ENCODE measurements at regions of chr4 and their contacts with region 1.

Region 1: DNA sequence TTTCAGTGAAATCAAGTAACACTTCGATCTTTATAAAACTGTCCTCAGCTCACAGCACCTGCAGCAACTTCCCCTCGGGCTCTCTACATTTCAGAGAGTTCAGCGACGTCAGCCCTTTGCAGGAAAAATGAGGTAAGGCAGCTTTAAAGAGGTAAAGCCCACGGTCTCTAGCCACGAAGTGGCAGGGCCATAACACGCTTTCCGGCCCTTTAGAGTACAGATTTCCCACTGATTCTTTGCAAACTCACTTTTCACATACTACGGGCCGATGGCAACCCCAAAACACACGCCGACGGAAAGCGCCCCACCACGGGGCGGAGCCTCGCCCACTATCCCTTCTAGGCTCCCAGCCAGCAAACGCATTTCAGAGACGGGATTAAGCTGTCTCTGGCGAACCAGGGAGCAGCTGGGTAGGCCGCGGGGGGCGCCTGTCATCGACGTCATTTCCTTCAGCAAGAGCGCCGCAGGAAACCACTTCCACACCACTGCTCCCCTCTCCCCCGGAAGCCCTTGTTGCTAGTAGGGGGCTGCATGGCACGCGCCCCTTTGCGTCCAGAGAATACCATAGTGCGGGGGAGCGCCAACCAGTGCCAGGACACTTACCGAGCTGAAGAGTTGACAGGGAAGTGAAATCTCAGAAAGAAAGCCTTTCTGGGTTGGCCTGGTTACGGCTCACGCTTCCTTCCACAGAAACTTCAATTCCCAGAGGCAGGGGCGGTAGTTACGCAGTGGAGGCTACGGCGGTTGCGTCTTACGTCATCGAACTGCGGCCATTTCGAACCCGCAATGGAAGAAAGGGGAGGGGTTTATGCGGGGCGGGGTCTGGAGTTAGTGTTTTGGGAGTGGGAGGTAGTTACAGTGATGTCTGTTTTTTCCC is at the start of gene TRMT10A:
- H3K4me3 Mint-ChIP-seq: peak within 1 kb of the TSS; percentile 87
- H3K27ac Mint-ChIP-seq: peak within 1 kb of the TSS; percentile 95
- H3K4me1 Mint-ChIP-seq: no peaks in the 10 kb centered on the region
- H3K27me3 Mint-ChIP-seq: peaks cover 12% of the 10 kb centered on the region

Region 2: GRCh38 chr4:98143001-98143899 is 1420.3 kb before region 1 on chr4 and contains the start of gene STPG2:
- intact Hi-C with region 1: loop called (anchors 10 kb)
- H3K4me3 Mint-ChIP-seq: peak within 1 kb of the TSS; percentile 78
- H3K27ac Mint-ChIP-seq: peak within 1 kb of the TSS; percentile 92
- H3K4me1 Mint-ChIP-seq: peaks cover 11% of the 10 kb centered on the region
- H3K27me3 Mint-ChIP-seq: peaks cover 5% of the 10 kb centered on the region

Region 3: GRCh38 chr4:99008051-99008450 is 555.5 kb before region 1 on chr4:
- intact Hi-C with region 1: no loop called
- H3K4me3 Mint-ChIP-seq: no peak overlapping the region
- H3K27ac Mint-ChIP-seq: no peak overlapping the region
- H3K4me1 Mint-ChIP-seq: peaks cover 18% of the 10 kb centered on the region
- H3K27me3 Mint-ChIP-seq: no peaks in the 10 kb centered on the region

Region 4: DNA sequence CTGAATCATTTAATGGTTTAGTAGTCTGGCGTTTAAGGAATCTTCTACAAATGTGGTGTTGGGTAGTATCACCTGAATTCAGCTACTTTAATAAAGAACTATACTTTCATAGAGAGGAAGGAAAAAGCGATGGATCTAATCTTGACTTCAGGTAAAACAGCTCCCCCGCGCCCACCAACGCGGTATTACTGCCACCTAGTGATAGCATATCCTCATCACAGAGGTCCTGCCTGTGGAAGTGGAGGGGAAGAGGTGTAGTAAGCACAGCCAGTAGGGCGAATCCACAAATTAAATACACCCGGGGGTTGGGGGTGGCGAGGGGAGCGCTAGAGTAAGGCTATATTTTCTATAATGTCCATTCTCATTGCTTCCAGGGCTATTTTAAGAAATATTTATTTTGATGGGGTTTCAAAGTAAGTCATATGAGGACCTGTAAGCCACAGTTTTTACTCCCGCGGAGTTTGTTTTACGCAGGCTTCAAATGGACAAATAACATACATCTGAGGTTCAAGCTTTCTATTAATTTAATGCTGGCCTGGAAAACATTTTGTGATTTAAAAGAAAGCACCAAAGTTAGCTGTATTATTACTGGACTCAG is 244.8 kb after region 1 on chr4:
- intact Hi-C with region 1: loop called (anchors 2 kb)
- H3K4me3 Mint-ChIP-seq: no peak overlapping the region
- H3K27ac Mint-ChIP-seq: no peak overlapping the region
- H3K4me1 Mint-ChIP-seq: peaks cover 10% of the 10 kb centered on the region
- H3K27me3 Mint-ChIP-seq: no peaks in the 10 kb centered on the region

Region 5: DNA sequence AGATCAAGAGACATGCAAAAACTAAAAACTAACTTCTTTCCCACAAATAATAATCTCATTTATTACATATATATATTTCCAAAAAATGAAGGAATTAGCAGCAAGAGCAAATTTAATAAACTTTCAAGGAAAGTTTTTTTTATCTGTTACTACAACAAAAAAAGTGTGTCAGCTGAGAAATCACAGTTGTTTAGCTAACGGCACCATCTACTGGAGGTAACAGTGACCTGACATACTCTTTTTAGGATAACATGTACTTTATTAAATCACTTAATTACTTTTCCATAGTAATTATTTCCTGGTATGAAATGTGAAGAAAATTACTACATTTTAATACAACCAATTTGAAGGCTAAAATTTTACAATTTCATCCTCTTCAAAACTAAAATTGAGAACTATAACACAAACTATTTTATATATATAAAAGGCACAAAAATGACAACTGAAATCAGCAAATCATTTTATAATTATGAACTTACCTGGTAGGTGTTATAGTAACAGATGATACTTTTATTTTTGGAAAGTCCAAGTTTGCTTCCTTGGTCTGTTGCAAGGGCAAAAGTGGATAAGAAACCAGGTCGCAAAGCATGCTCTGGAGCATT is 321.6 kb after region 1 on chr4:
- intact Hi-C with region 1: no loop called
- H3K4me3 Mint-ChIP-seq: no peak overlapping the region
- H3K27ac Mint-ChIP-seq: no peak overlapping the region
- H3K4me1 Mint-ChIP-seq: peaks cover 5% of the 10 kb centered on the region
- H3K27me3 Mint-ChIP-seq: no peaks in the 10 kb centered on the region

Region 6: DNA sequence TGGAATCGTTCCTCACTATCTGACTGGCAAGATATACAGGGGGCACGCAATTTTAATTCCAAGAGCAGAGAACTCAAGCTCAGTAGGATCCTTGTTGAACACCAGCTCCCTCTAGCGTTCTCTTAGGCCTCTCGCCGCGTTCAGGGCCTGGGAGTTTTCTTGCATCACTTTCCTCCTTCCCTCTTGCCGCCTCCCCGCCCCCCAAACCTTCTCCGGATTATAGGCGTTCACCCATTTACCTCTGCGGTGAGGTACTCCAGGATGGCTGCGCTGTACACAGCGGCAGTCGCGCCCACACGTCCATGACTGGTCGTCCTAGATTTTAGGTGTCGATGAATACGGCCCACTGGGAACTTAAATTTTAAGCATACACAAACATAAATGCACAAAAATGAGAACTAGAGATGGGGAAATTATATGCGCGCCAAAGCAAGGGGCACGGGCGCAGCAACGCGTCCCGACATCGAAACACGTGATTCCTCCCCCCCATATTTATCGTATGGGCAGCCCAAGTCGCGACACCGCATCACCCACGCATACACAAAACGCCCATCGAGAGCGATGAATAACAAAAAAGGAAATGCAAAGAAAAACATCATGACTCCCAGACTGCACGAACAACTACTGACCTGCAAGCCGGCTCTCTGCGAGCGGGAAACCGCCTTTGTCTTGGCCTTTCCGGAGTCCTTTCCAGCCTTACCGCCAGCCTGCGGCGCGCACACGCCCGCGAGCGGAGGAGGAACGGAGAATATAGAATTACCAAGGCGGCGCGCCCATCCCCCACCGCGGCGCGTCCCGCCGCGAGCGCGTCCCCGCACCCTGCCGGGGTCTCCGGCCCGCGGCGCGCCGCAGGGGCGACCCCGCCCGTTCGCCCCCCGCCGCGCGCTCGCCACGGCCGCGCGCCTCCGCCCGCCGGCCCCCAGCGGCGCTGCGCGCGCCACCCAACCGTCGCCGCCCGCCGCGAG is 385.8 kb after region 1 on chr4:
- intact Hi-C with region 1: loop called (anchors 1 kb)
- H3K4me3 Mint-ChIP-seq: no peak overlapping the region
- H3K27ac Mint-ChIP-seq: no peak overlapping the region
- H3K4me1 Mint-ChIP-seq: peaks cover 30% of the 10 kb centered on the region
- H3K27me3 Mint-ChIP-seq: no peaks in the 10 kb centered on the region

Region 7: GRCh38 chr4:101347557-101348366 is 1784.2 kb after region 1 on chr4:
- intact Hi-C with region 1: loop called (anchors 10 kb)
- H3K4me3 Mint-ChIP-seq: peak overlapping the region; percentile 86
- H3K27ac Mint-ChIP-seq: peak overlapping the region; percentile 94
- H3K4me1 Mint-ChIP-seq: peaks cover 46% of the 10 kb centered on the region
- H3K27me3 Mint-ChIP-seq: peaks cover 8% of the 10 kb centered on the region

Measured in dendritic cell treated with granulocyte-macrophage colony-stimulating factor and Interleukin-4, amounts not matched to agents 40 ng/mL and 50 ng/mL, for 4 days (primary cell).